WTC11 (cell line): ENCODE measurements at regions of chr9 and their contacts with region 1.

Region 1: GRCh38 chr9:98207606-98208005 is 15.2 kb upstream of the CORO2A start:
- DNase-seq: no peak
- ATAC-seq: no peak
- H3K4me3 Mint-ChIP-seq: no peak overlapping the region
- H3K27ac Mint-ChIP-seq: no peak overlapping the region
- H3K4me1 Mint-ChIP-seq: peaks cover 16% of the 10 kb centered on the region
- H3K27me3 Mint-ChIP-seq: no peaks in the 10 kb centered on the region
- CTCF ChIP-seq: no peak

Region 2: DNA sequence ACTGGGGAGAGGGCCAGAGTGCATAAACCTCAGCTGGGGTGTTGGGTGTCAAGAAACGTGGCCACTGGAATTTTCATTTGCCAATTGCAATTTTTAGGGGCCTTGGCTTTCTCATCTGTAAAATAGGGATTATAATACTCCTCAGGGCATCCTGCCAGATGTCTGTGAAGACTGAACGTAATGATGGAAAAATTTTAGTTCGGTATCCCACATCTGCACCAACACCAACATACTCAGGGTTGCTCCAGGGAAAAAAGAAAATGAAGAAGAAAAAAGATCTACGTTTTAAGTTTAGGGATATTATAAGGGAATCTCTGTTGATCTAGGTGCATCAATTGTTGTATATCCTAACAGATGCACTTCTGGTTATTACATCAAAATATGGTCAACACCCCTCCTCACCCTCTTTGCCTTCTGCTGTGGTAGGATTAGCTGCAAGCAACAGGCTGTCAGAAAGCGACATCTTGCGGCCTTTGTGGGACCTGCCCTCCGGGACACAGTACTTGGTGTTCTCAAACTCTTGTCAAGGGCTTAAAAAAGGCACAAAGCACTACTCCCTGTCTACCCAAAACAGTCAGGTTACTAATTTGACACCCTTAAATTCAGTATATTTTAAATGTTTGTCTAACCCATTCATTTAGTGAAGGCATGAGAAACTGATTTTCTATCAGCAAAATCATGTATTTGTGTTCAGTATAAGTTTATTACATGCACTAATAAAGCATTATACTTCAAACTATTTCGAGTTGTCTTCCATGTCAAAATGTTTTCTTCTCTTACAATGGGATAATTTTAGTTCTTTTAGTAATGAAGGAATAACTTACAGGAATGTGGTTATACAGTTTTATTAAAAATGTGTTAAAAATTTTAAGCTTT is 56.1 kb after region 1 on chr9:
- CTCF ChIA-PET with region 1: interaction called, 10 read pairs
- POLR2A ChIA-PET with region 1: no interaction called
- DNase-seq: peak; percentile 86
- ATAC-seq: peak; percentile 99
- H3K4me3 Mint-ChIP-seq: no peak overlapping the region
- H3K27ac Mint-ChIP-seq: no peak overlapping the region
- H3K4me1 Mint-ChIP-seq: peaks cover 49% of the 10 kb centered on the region
- H3K27me3 Mint-ChIP-seq: no peaks in the 10 kb centered on the region
- CTCF ChIP-seq: peak; percentile 58; the same call in 1 of the 2 replicates